ENCODE measurements at regions of chr20 and their contacts with region 1.

Region 1: GRCh38 chr20:31605031-31605901 is at the start of gene ID1:
- DNase-seq: peak; percentile 95
- ATAC-seq: peak; percentile 56
- H3K4me3 ChIP-seq: peak within 1 kb of the TSS; percentile 91 to 96
- H3K27ac ChIP-seq: peak within 1 kb of the TSS; percentile 98
- H3K4me1 ChIP-seq: peaks cover 60 to 93% of the 10 kb centered on the region in 2 experiments
- H3K27me3 ChIP-seq: no peaks in the 10 kb centered on the region
- CTCF ChIP-seq: no peak
- POLR2A ChIP-seq: peak; percentile 99
- RAD21 ChIP-seq: no peak
- total RNA-seq, gene ID1: 811 TPM

Region 2: DNA sequence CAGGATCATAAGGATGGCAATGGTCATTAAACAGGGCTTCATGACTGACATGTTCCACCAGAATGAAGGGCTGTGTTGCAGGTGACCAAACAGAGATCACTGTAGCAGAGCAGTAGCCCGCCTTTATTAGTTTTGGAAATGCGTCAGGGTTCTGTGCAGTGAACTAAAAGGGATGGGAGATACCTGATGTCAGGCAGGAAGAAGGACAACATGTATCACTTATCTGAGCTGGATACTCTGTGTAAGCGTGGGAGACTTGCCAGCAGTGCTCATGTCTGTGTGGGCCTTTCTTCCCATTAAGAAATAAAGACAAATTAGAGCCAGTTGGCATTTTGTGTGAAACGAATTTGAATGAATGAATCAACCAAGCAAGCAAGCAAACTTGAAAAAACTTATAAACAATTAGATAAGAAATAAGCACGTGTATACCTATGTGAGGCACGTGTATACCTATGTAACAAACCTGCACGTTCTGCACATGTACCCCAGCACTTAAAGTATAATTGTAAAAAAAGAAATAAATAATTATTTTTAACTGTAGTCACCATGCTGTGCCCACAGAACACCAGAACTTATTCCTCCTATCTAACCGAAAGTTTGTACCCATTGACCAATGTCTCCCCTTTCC is 296.6 kb before region 1 on chr20 and contains the start of gene DEFB116:
- CTCF ChIA-PET with region 1: no interaction called
- POLR2A ChIA-PET with region 1: no interaction called
- RAD21 ChIA-PET with region 1: no interaction called
- intact Hi-C with region 1: loop called (anchors 5 kb)
- DNase-seq: no peak
- ATAC-seq: no peak
- H3K4me3 ChIP-seq: no peak within 1 kb of the TSS
- H3K27ac ChIP-seq: no peak within 1 kb of the TSS
- H3K4me1 ChIP-seq: no peaks in the 10 kb centered on the region
- H3K27me3 ChIP-seq: no peaks in the 10 kb centered on the region
- CTCF ChIP-seq: no peak
- POLR2A ChIP-seq: no peak
- RAD21 ChIP-seq: no peak
- total RNA-seq, gene DEFB116: not detected

Region 3: GRCh38 chr20:31452575-31452974 is 152.7 kb before region 1 on chr20:
- CTCF ChIA-PET with region 1: no interaction called
- POLR2A ChIA-PET with region 1: no interaction called
- RAD21 ChIA-PET with region 1: no interaction called
- intact Hi-C with region 1: loop called (anchors 5 kb)
- DNase-seq: no peak
- ATAC-seq: no peak
- H3K4me3 ChIP-seq: no peak overlapping the region
- H3K27ac ChIP-seq: no peak overlapping the region
- H3K4me1 ChIP-seq: no peaks in the 10 kb centered on the region
- H3K27me3 ChIP-seq: no peaks in the 10 kb centered on the region
- CTCF ChIP-seq: no peak
- POLR2A ChIP-seq: no peak
- RAD21 ChIP-seq: no peak

Region 4: GRCh38 chr20:31566658-31567379 is 38.4 kb before region 1 on chr20:
- CTCF ChIA-PET with region 1: interaction called, 589 read pairs
- POLR2A ChIA-PET with region 1: interaction called, 1,106 read pairs
- RAD21 ChIA-PET with region 1: interaction called, 74 to 102 read pairs
- intact Hi-C with region 1: loop called (anchors 2 kb)
- DNase-seq: peak; percentile 75
- ATAC-seq: peak; percentile 70
- H3K4me3 ChIP-seq: peak overlapping the region; percentile 4 to 15; a peak in 2 of 4 replicates
- H3K27ac ChIP-seq: peak overlapping the region; percentile 98
- H3K4me1 ChIP-seq: peaks cover 95 to 98% of the 10 kb centered on the region in 2 experiments
- H3K27me3 ChIP-seq: no peaks in the 10 kb centered on the region
- CTCF ChIP-seq: peak in 2 of 3 experiments; percentile 15 to 25; a peak in 2 of 6 replicates
- POLR2A ChIP-seq: no peak
- RAD21 ChIP-seq: no peak

Region 5: DNA sequence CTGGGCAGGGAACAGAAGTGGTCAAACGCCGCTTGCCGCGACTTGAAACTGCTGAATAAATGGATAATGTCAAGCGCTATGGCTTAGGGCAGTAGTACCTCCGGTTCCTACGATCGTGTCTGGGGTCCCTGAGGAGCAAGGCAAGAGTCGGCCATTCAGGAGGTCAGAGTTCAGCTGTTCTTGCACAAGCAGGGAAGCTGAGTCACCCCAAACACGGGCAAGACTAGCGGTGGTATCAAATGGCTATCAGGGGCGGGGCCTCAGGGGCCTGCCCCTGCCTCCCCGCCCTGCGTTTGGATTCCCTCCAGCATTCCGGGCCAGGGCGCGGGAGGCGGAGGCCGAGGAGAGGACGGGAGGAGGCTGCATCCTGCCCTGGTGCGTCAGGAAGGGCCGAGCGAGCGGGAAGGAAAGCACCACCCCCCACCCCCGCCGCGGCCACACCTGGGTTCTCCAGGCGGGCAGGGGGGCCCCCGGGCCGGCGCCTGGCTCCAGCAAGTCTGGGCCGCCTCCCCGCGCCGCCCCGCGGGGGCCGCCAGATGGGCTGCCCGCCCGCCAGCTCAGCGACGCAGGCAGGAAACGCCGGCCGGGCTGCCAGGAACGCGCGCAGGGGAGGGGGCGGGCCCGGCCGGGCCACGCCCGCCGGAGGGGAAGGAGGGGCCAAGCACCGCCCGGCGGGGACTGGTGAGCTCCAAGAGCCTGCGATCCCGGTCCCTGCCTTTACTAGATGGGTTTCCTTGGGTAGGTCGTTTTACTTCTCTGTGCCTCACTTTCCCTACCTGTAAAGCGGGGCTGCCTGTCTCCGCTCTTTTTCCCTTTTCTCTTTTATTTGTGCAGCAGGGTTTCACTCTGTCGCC is 32.3 kb before region 1 on chr20:
- CTCF ChIA-PET with region 1: interaction called, 256 read pairs
- POLR2A ChIA-PET with region 1: interaction called, 1,106 read pairs
- RAD21 ChIA-PET with region 1: interaction called, 9 to 74 read pairs
- intact Hi-C with region 1: loop called (anchors 1 kb)
- DNase-seq: peak; percentile 96
- ATAC-seq: peak; percentile 72
- H3K4me3 ChIP-seq: peak overlapping the region; percentile 54 to 61
- H3K27ac ChIP-seq: peak overlapping the region; percentile 98
- H3K4me1 ChIP-seq: peaks cover 73 to 79% of the 10 kb centered on the region in 2 experiments
- H3K27me3 ChIP-seq: no peaks in the 10 kb centered on the region
- CTCF ChIP-seq: no peak
- POLR2A ChIP-seq: peak; percentile 59
- RAD21 ChIP-seq: no peak

Region 6: GRCh38 chr20:31674895-31675827 is 69.9 kb after region 1 on chr20:
- CTCF ChIA-PET with region 1: no interaction called
- POLR2A ChIA-PET with region 1: no interaction called
- RAD21 ChIA-PET with region 1: no interaction called
- intact Hi-C with region 1: no loop called
- DNase-seq: no peak
- ATAC-seq: no peak
- H3K4me3 ChIP-seq: no peak overlapping the region
- H3K27ac ChIP-seq: peak overlapping the region; percentile 55
- H3K4me1 ChIP-seq: peaks cover 62 to 95% of the 10 kb centered on the region in 2 experiments
- H3K27me3 ChIP-seq: no peaks in the 10 kb centered on the region
- CTCF ChIP-seq: no peak
- POLR2A ChIP-seq: no peak
- RAD21 ChIP-seq: no peak